ENCODE measurements at regions of chrX and their contacts with region 1.

Region 1: DNA sequence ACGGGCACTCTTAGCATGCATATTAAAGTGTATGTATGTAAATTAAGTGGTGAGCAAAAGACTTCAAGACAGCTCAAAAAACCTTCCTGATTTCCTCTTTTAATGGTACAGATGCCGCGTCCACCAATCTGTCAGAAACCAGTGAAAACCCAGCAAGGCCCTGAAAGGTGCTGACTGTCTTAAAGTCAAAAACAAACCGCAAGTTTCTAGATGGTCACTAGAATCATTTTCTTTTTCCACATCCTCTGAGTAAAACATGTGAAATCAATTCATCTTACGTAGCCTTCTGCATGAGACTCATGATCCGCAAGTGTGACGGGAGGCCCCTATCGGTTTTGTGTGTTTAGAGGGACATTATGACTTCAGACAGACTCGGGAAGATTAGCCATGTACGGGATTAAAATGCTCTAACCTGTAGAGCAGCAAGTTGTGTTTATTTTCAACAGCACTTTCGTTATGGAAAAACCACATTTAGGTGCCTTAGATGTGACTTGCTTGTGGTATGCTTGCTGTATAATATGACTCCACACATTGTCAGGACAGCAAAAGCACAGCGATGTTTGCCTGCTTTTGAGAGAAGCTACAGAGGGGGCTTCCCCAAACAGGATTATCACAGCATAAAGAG is 88.2 kb upstream of the STS start:
- DNase-seq: peak; percentile 89
- ATAC-seq: peak; percentile 95
- H3K4me3 ChIP-seq: peak overlapping the region; percentile 34; the same call in 1 of the 2 replicates
- H3K27ac ChIP-seq: peak overlapping the region; percentile 72
- H3K4me1 ChIP-seq: peaks cover 25% of the 10 kb centered on the region
- H3K27me3 ChIP-seq: no peaks in the 10 kb centered on the region
- CTCF ChIP-seq: no peak; a peak in 1 of 6 replicates
- EP300 ChIP-seq: peak; percentile 90 to 93
- POLR2A ChIP-seq: no peak
- RAD21 ChIP-seq: peak; percentile 45

Region 2: GRCh38 chrX:6738518-6739470 is 320.5 kb before region 1 on chrX:
- CTCF ChIA-PET with region 1: interaction called, 11 read pairs
- POLR2A ChIA-PET with region 1: interaction called, 3 read pairs
- RAD21 ChIA-PET with region 1: interaction called, 11 read pairs
- SMC1A ChIA-PET with region 1: interaction called, 19 read pairs
- in situ Hi-C with region 1: loop called (anchors 10 kb)
- intact Hi-C with region 1: loop called (anchors 2 kb)
- DNase-seq: peak; percentile 93
- ATAC-seq: peak; percentile 98
- H3K4me3 ChIP-seq: no peak overlapping the region
- H3K27ac ChIP-seq: peak overlapping the region; percentile 88
- H3K4me1 ChIP-seq: peaks cover 15% of the 10 kb centered on the region
- H3K27me3 ChIP-seq: no peaks in the 10 kb centered on the region
- CTCF ChIP-seq: no peak
- EP300 ChIP-seq: peak; percentile 96 to 98
- POLR2A ChIP-seq: no peak
- RAD21 ChIP-seq: no peak; the same call in 1 of the 2 replicates

Region 3: GRCh38 chrX:6826856-6827255 is 232.5 kb before region 1 on chrX:
- CTCF ChIA-PET with region 1: no interaction called
- POLR2A ChIA-PET with region 1: no interaction called
- RAD21 ChIA-PET with region 1: no interaction called
- SMC1A ChIA-PET with region 1: no interaction called
- in situ Hi-C with region 1: no loop called
- intact Hi-C with region 1: no loop called
- DNase-seq: no peak
- ATAC-seq: no peak
- H3K4me3 ChIP-seq: no peak overlapping the region
- H3K27ac ChIP-seq: no peak overlapping the region
- H3K4me1 ChIP-seq: no peaks in the 10 kb centered on the region
- H3K27me3 ChIP-seq: no peaks in the 10 kb centered on the region
- CTCF ChIP-seq: no peak
- EP300 ChIP-seq: no peak
- POLR2A ChIP-seq: no peak
- RAD21 ChIP-seq: no peak

Region 4: DNA sequence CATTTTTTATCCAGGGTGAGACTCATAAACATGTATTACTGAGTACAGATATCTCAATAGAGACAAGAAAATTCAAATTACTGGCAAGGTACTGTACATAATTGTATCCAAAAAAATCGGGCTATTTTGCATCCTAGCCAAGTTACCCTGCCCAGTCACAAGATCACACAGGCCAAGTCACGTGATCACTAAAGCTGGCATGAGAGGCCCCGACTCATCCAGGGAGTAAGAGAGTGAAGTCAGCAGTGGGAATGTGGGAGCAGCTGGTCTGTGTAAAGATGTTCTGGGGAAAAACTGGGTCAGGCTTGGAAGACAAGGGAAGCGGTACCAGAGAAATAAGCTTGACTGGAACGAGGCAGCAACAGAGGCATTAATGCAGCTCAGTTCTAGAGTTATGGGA is 31.1 kb before region 1 on chrX:
- CTCF ChIA-PET with region 1: no interaction called
- POLR2A ChIA-PET with region 1: no interaction called
- RAD21 ChIA-PET with region 1: no interaction called
- SMC1A ChIA-PET with region 1: no interaction called
- in situ Hi-C with region 1: no loop called
- intact Hi-C with region 1: no loop called
- DNase-seq: no peak
- ATAC-seq: no peak
- H3K4me3 ChIP-seq: no peak overlapping the region
- H3K27ac ChIP-seq: no peak overlapping the region
- H3K4me1 ChIP-seq: no peaks in the 10 kb centered on the region
- H3K27me3 ChIP-seq: no peaks in the 10 kb centered on the region
- CTCF ChIP-seq: no peak
- EP300 ChIP-seq: no peak
- POLR2A ChIP-seq: no peak
- RAD21 ChIP-seq: no peak

Region 5: GRCh38 chrX:7083468-7084396 is 24.4 kb after region 1 on chrX:
- CTCF ChIA-PET with region 1: interaction called, 10 read pairs
- POLR2A ChIA-PET with region 1: interaction called, 3 read pairs
- RAD21 ChIA-PET with region 1: interaction called, 30 read pairs
- SMC1A ChIA-PET with region 1: interaction called, 55 read pairs
- in situ Hi-C with region 1: no loop called
- intact Hi-C with region 1: loop called (anchors 1 kb)
- DNase-seq: peak; percentile 84
- ATAC-seq: peak; percentile 85
- H3K4me3 ChIP-seq: no peak overlapping the region; the same call in 1 of the 2 replicates
- H3K27ac ChIP-seq: peak overlapping the region; percentile 46
- H3K4me1 ChIP-seq: peaks cover 45% of the 10 kb centered on the region
- H3K27me3 ChIP-seq: no peaks in the 10 kb centered on the region
- CTCF ChIP-seq: no peak
- EP300 ChIP-seq: peak; percentile 94
- POLR2A ChIP-seq: no peak
- RAD21 ChIP-seq: no peak

Region 6: DNA sequence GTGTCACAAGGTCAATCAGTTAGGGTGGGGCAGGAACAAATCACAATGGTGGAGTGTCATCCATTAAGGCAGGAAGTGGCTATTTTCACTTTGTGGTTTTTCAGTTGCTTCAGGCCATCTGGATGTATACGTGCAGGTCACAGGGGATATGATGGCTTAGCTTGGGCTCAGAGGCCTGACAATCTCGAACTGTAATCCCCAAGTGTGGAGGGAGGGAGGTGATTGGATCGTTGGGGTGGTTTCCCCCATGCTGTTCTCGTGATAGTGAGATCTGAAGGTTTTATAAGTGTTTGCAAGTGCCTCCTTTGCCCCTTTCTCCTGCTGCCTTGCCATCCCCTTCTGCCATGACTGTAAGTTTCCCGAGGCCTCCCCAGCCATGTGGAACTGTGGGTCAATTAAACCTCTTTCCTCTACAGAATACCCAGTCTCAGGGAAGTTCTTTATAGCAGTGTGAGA is 51.5 kb after region 1 on chrX:
- CTCF ChIA-PET with region 1: no interaction called
- POLR2A ChIA-PET with region 1: interaction called, 5 read pairs
- RAD21 ChIA-PET with region 1: interaction called, 12 read pairs
- SMC1A ChIA-PET with region 1: interaction called, 17 read pairs
- in situ Hi-C with region 1: no loop called
- intact Hi-C with region 1: loop called (anchors 1 kb)
- DNase-seq: peak; percentile 73
- ATAC-seq: peak; percentile 84
- H3K4me3 ChIP-seq: no peak overlapping the region
- H3K27ac ChIP-seq: peak overlapping the region; percentile 99
- H3K4me1 ChIP-seq: peaks cover 68% of the 10 kb centered on the region
- H3K27me3 ChIP-seq: no peaks in the 10 kb centered on the region
- CTCF ChIP-seq: no peak
- EP300 ChIP-seq: peak; percentile 51 to 77; a peak in 3 of 4 replicates
- POLR2A ChIP-seq: peak; percentile 61
- RAD21 ChIP-seq: no peak

Region 7: DNA sequence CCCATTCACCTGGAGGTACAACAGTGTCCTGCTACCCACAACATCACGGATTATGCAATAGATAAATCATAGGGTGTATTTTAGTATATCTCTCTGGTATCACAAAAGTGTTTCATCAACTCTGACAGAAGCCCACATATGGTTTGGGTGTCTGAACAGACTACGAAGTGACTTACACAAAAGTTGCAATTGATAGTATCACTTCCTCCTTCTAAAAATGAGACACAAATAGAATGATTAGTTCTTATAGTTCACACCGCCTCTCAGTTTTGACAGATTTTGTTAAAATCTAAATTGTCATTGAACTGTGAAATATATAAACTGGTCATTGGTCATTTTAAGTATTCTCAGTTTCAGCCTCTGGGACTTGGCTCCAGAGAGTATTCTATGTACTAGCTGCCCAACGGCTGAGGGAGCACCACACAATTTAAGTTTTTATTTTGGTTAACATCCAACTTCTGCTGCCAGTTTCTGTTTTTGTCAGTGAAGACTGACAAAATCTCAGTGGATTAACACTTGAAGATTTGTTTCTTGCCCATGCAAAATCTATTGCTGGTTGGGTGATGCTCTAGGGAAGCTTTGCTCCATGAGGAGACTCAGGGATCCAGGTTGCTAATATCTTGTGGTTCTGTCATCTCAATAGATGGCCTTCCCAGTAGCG is 202.5 kb after region 1 on chrX:
- CTCF ChIA-PET with region 1: no interaction called
- POLR2A ChIA-PET with region 1: no interaction called
- RAD21 ChIA-PET with region 1: no interaction called
- SMC1A ChIA-PET with region 1: no interaction called
- in situ Hi-C with region 1: no loop called
- intact Hi-C with region 1: loop called (anchors 10 kb)
- DNase-seq: peak; percentile 57
- ATAC-seq: peak; percentile 92
- H3K4me3 ChIP-seq: no peak overlapping the region
- H3K27ac ChIP-seq: peak overlapping the region; percentile 13; the same call in 1 of the 2 replicates
- H3K4me1 ChIP-seq: peaks cover 18% of the 10 kb centered on the region
- H3K27me3 ChIP-seq: no peaks in the 10 kb centered on the region
- CTCF ChIP-seq: no peak
- EP300 ChIP-seq: peak; percentile 92 to 96
- POLR2A ChIP-seq: no peak
- RAD21 ChIP-seq: no peak